ENCODE measurements at regions of chr5 and their contacts with region 1.

Region 1: GRCh38 chr5:177351385-177352329 is at the start of gene LMAN2:
- DNase-seq: peak; percentile 91
- ATAC-seq: peak; percentile 97
- H3K4me3 ChIP-seq: peak within 1 kb of the TSS; percentile 92 to 98 (median 93)
- H3K27ac ChIP-seq: peak within 1 kb of the TSS; percentile 94
- H3K4me1 ChIP-seq: peaks cover 86% of the 10 kb centered on the region
- H3K27me3 ChIP-seq: no peaks in the 10 kb centered on the region; a peak in 1 of 5 replicates
- CTCF ChIP-seq: no peak
- EP300 ChIP-seq: no peak; a peak in 1 of 4 replicates
- POLR2A ChIP-seq: peak; percentile 68
- RAD21 ChIP-seq: peak; percentile 27; the same call in 1 of the 2 replicates
- total RNA-seq, gene LMAN2: 94.5 and 191 TPM in 2 replicates

Region 2: GRCh38 chr5:176537608-176538504 is 813.8 kb before region 1 on chr5:
- CTCF ChIA-PET with region 1: no interaction called
- POLR2A ChIA-PET with region 1: no interaction called
- in situ Hi-C with region 1: loop called (anchors 25 kb)
- intact Hi-C with region 1: no loop called
- DNase-seq: peak; percentile 98
- ATAC-seq: peak; percentile 67
- H3K4me3 ChIP-seq: peak overlapping the region; percentile 90 to 98 (median 97)
- H3K27ac ChIP-seq: peak overlapping the region; percentile 95
- H3K4me1 ChIP-seq: peaks cover 69% of the 10 kb centered on the region
- H3K27me3 ChIP-seq: no peaks in the 10 kb centered on the region; a peak in 1 of 5 replicates
- CTCF ChIP-seq: no peak
- EP300 ChIP-seq: 0 out of 4 replicates have a peak, but pooled peaks of 1 of the 2 experiments have one; percentile 20
- POLR2A ChIP-seq: peak in 1 of 2 experiments; percentile 74; a peak in 2 of 4 replicates
- RAD21 ChIP-seq: 0 out of 2 replicates have a peak, but pooled peaks have one; percentile 6

Region 3: GRCh38 chr5:177362610-177363507 is 11.2 kb after region 1 on chr5:
- CTCF ChIA-PET with region 1: no interaction called
- POLR2A ChIA-PET with region 1: interaction called, 50 read pairs
- in situ Hi-C with region 1: no loop called
- intact Hi-C with region 1: no loop called
- DNase-seq: no peak
- ATAC-seq: peak; percentile 24
- H3K4me3 ChIP-seq: peak overlapping the region; percentile 57 to 81 (median 60)
- H3K27ac ChIP-seq: no peak overlapping the region
- H3K4me1 ChIP-seq: peaks cover 95% of the 10 kb centered on the region
- H3K27me3 ChIP-seq: peaks cover 0 to 23% of the 10 kb centered on the region in 2 experiments; a peak in 4 of 5 replicates
- CTCF ChIP-seq: peak; percentile 14; the same call in 1 of the 2 replicates
- EP300 ChIP-seq: no peak
- POLR2A ChIP-seq: no peak
- RAD21 ChIP-seq: no peak

Region 4: DNA sequence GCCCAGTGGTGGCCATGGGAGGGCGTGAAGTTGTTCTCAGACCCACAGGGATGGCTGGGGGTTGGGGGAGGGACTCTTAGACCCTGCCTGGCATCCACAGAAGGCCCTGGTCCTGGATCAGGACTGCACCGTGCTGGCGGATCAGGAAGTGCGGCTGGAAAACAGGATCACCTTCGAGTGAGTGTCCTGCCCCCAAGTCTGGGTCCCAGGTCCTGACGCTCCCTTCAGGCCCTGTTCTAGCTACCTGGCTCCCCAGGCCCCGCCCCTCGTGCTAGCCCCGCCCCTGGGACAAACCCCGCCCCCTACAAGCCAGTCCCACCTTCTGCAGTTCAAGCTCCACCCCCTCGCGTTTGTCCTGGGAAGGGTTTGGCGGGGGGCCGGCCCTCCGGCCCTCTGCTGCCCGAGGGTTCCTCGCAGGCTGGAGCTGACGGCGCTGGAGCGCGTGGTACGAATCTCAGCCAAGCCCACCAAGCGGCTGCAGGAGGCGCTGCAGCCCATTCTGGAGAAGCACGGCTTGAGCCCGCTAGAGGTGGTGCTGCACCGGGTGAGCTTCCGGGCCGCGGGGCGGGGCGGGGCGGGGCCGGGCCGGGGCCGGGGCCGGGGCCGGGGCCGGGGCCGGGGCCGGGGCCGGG is 18.9 kb after region 1 on chr5:
- CTCF ChIA-PET with region 1: no interaction called
- POLR2A ChIA-PET with region 1: interaction called, 84 read pairs
- in situ Hi-C with region 1: no loop called
- intact Hi-C with region 1: no loop called
- DNase-seq: peak; percentile 94
- ATAC-seq: peak; percentile 82
- H3K4me3 ChIP-seq: peak overlapping the region in 2 of 3 experiments; percentile 74 to 92; a peak in 3 of 6 replicates
- H3K27ac ChIP-seq: peak overlapping the region; percentile 35
- H3K4me1 ChIP-seq: peaks cover 74% of the 10 kb centered on the region
- H3K27me3 ChIP-seq: no peaks in the 10 kb centered on the region; a peak in 1 of 5 replicates
- CTCF ChIP-seq: peak; percentile 92
- EP300 ChIP-seq: no peak
- POLR2A ChIP-seq: no peak
- RAD21 ChIP-seq: peak; percentile 95

Region 5: DNA sequence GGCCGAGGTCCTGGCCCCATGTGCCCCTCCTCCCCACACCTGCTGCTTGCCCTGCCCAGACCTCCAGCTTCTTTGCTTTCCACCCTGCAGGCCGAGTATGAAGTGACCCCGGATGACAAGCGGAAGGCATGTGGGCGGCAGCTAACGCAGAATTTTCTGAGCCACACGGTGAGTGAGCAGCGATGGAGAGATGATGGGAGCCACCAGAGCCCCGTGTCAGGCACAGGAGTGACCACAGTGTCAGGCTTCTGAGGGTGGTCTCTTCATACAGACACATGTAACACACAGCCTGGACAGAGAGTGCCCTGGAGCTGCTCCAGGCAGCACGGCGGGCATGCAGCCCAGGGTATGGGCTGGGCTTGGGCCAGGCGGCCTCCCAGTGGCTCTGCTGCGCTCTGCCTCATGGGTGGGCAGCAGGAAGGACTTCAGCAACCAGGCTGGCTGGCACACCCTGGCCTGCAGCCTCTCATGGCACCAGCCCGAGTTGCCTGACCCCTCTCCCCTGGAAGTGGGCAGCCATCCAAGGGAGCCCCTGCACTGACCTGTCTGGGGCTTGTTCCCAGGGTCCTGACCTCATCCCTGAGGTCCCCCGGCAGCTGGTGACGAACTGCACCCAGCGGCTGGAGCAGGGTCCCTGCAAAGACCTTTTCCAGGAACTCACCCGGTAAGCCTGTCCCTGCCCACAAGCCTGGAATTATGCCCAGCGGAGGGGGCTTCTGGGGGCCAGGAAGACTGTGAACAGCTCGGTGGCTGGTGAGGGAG is 80.7 kb after region 1 on chr5:
- CTCF ChIA-PET with region 1: no interaction called
- POLR2A ChIA-PET with region 1: no interaction called
- in situ Hi-C with region 1: no loop called
- intact Hi-C with region 1: no loop called
- DNase-seq: no peak
- ATAC-seq: no peak
- H3K4me3 ChIP-seq: no peak overlapping the region
- H3K27ac ChIP-seq: no peak overlapping the region
- H3K4me1 ChIP-seq: peaks cover 48% of the 10 kb centered on the region
- H3K27me3 ChIP-seq: no peaks in the 10 kb centered on the region
- CTCF ChIP-seq: no peak
- EP300 ChIP-seq: no peak
- POLR2A ChIP-seq: no peak
- RAD21 ChIP-seq: no peak